PC-9 (cell line): ENCODE measurements at regions of chr1 and their contacts with region 1.

Region 1: DNA sequence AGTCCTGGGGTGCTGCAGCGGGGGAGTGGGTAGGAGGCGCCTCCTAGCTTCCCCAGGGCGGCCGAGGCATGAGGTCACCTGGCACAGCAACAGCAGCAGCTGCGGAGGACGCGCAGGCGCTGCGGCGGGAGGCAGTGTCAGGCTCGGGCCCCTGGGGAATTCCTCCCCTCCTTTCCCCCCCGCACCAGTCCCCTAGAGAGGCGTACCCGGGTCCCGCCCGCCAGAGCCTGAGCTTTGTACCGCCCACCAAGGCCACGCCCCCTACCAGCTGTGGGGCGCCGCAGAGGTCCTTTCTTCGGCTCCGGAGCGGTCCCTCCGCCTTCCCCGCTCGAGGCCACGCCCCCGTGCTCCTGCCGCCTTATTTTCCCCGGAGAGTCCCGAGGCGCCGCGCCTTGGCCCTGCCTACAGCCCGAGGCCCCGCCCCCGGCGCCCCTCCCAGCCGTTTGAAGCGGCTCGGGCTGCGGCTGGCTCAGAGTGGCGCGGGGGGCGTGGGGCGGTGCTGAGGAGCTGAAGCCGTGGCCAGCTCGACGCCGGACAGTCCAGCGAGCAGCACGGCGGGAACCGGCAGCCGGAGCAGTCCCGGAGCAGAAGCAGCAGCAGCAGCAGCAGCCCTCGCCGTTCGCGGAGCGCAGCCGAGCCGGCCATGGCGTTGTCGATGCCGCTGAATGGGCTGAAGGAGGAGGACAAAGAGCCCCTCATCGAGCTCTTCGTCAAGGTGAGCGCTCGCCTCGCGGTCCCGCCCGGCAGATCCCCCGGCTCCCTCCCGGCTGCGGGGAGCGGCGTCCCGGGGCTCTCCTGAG is at the start of gene CLIC4:
- DNase-seq: peak; percentile 89 to 100
- H3K4me3 ChIP-seq: peak within 1 kb of the TSS; percentile 69
- H3K27ac ChIP-seq: peak within 1 kb of the TSS; percentile 60
- H3K4me1 ChIP-seq: peaks cover 31% of the 10 kb centered on the region
- H3K27me3 ChIP-seq: no peaks in the 10 kb centered on the region
- CTCF ChIP-seq: no peak
- total RNA-seq, gene CLIC4: 94.6 and 123 TPM in 2 replicates

Region 2: DNA sequence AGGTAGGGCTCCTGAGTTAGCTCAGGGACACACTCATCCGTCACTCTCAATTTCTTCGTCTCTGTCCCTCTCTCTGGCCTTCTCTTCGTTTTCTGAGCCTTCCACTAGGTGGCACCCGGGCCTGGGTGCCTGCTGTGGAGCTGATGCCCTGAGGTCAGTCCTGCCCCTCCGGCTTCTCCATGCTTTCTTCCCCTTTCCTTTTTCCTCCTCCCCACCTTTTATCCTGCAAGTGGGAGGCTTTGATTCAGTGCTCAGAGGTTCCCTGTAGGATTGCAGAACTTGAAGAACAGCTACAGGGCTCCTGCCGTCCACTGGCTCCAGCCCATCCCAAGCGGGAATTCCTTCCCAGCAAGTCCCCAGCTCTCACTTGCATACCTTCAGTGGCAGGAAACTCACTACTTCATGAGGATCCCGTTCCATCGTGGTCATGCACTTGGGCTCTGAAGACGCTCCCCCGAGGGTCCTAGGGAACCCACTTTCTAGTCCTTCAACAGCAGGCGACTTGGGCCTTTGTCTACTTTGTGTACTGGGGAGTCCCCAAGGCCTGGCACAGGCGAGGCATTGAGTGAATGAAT is 56.4 kb before region 1 on chr1:
- CTCF ChIA-PET with region 1: interaction called, 9 read pairs
- POLR2A ChIA-PET with region 1: interaction called, 7 read pairs
- intact Hi-C with region 1: loop called (anchors 1 kb)
- DNase-seq: peak in 1 of 2 experiments; percentile 66
- H3K4me3 ChIP-seq: no peak overlapping the region
- H3K27ac ChIP-seq: no peak overlapping the region
- H3K4me1 ChIP-seq: peaks cover 6% of the 10 kb centered on the region; the same call in 1 of the 2 replicates
- H3K27me3 ChIP-seq: no peaks in the 10 kb centered on the region
- CTCF ChIP-seq: peak; percentile 74

Region 3: GRCh38 chr1:24724345-24725208 is 20.5 kb before region 1 on chr1:
- CTCF ChIA-PET with region 1: interaction called, 10 read pairs
- POLR2A ChIA-PET with region 1: interaction called, 23 read pairs
- intact Hi-C with region 1: loop called (anchors 1 kb)
- DNase-seq: peak; percentile 86 to 87
- H3K4me3 ChIP-seq: peak overlapping the region; percentile 63; the same call in 1 of the 2 replicates
- H3K27ac ChIP-seq: peak overlapping the region; percentile 87
- H3K4me1 ChIP-seq: peaks cover 22% of the 10 kb centered on the region
- H3K27me3 ChIP-seq: no peaks in the 10 kb centered on the region
- CTCF ChIP-seq: no peak

Region 4: DNA sequence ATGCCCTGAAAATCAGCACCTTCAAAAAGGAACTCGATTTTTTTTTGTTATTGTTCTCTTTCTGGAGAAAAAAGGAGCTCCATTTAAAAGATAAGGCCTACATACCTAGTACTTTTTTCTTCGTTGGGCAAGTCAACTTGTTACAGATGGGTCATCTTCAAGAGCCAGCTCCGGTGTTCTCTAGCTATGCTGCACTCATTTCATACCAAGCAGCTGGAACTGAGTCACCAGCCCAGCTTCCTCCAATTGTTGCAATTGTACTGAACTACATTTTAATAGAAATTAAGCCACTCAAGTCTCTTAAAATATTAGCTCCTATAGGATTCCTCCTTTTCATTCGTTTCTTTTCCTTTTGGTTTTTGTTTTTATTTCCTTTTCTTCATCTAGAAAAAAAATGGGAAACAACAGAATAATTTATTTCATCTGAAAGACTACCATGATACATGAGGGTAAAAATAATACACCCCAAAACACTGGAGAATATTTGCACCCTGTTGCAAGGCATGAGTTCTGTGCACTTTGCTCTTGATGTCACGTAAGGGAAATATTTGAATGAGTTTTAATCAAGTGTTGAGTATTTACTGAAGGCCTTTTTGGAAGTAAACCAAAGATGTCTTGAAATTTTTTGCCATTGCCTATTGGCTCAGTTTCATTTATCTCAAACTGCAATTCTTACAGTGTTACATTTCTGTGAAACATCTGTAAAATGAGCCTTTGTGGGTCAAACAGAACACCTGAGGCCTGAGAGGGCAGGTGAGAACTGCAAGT is 60.6 kb after region 1 on chr1:
- CTCF ChIA-PET with region 1: interaction called, 10 read pairs
- POLR2A ChIA-PET with region 1: interaction called, 8 read pairs
- intact Hi-C with region 1: no loop called
- DNase-seq: peak in 1 of 2 experiments; percentile 12
- H3K4me3 ChIP-seq: no peak overlapping the region
- H3K27ac ChIP-seq: no peak overlapping the region
- H3K4me1 ChIP-seq: no peaks in the 10 kb centered on the region
- H3K27me3 ChIP-seq: no peaks in the 10 kb centered on the region
- CTCF ChIP-seq: no peak

Region 5: GRCh38 chr1:24830680-24831272 is 85.7 kb after region 1 on chr1:
- CTCF ChIA-PET with region 1: interaction called, 3 read pairs
- POLR2A ChIA-PET with region 1: interaction called, 11 read pairs
- intact Hi-C with region 1: loop called (anchors 5 kb)
- DNase-seq: peak in 1 of 2 experiments; percentile 54
- H3K4me3 ChIP-seq: no peak overlapping the region
- H3K27ac ChIP-seq: no peak overlapping the region
- H3K4me1 ChIP-seq: no peaks in the 10 kb centered on the region
- H3K27me3 ChIP-seq: no peaks in the 10 kb centered on the region
- CTCF ChIP-seq: peak; percentile 80